ENCODE measurements at regions of chr20 and their contacts with region 1.

Region 1: GRCh38 chr20:62972270-62973032 is 19.9 kb downstream of the SLC17A9 start:
- DNase-seq: peak; percentile 86
- H3K4me3 ChIP-seq: no peak overlapping the region
- H3K27ac ChIP-seq: no peak overlapping the region
- H3K4me1 ChIP-seq: no peaks in the 10 kb centered on the region
- H3K27me3 ChIP-seq: peaks cover 39% of the 10 kb centered on the region
- CTCF ChIP-seq: peak; percentile 90

Region 2: DNA sequence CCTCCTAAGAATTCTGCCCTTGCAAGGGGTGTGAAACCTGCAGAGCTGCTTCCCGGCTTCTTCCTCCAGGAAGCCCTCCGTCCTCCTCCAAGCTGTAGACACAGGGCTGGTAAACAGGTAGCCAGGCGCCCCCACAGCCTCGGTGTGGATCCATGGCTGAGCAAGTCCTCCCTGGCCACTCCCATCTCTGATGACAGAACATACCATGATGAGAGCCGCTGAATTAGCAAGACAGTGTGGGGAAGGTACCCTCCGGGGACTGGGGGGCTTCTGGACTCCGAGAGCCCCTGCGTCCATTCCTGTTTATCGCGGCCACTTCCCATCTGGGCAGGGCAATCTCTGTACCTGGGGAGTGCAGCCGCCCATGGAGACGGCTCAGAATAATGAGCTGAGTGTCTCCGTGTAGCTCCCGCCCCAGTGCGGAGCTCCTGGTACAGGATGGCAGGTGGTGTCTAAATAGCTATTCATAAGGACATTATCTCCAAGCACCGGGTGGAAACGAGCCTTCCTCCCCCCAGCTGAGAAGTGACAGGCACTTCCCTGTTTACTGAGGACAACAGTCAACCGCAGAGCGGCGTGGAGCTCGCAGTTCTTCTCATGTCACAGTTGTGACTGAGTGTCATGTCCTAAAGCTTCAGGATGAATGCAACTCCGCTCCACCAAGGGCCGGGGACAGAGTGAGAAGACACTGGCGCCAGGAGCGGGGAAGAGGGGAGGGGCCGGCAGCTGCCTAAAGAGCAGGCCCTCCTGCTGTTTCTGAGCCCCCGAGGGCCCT is 286.5 kb before region 1 on chr20:
- CTCF ChIA-PET with region 1: no interaction called
- POLR2A ChIA-PET with region 1: no interaction called
- intact Hi-C with region 1: no loop called
- DNase-seq: no peak
- H3K4me3 ChIP-seq: no peak overlapping the region
- H3K27ac ChIP-seq: no peak overlapping the region
- H3K4me1 ChIP-seq: peaks cover 53% of the 10 kb centered on the region
- H3K27me3 ChIP-seq: no peaks in the 10 kb centered on the region
- CTCF ChIP-seq: no peak

Region 3: DNA sequence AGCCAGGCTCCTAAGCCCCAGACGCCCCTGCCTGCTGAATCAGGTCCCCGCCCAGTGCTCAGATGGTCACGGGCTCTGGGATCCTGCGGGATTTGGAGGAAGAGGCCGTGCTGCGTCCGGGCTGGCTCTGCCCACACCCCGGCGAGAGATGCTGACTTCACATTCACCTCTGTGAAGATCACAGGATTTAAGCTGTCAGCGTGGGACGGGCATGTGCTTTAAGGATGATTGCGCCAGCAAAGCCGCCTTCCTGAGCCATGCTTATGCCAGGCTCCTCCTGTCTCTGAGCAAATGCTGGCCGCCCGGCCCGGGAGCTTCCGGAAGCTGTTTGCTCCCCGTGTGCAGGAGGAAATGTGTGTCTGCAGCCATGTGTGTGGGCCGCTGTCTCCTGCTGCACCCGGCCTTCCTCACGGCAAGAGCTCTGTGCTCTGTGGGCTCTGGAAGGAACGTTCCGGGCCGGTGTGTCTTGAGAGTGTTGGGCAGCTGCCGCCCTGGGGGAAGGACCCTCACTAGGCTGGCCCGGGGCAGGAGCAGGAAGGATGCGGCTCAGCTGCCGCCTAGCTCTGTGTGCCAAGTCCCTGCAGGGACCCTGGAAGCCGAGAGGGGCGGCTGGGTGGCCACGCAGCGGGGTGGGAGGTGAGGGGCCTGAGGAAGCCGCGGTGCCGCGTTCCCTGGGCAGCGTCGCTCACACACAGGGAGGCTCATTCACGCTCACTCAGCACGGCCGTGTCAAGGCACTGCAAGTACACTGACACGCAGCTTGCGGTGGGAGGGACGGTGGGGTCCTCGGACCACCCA is 53.3 kb after region 1 on chr20:
- CTCF ChIA-PET with region 1: interaction called, 10 read pairs
- POLR2A ChIA-PET with region 1: no interaction called
- intact Hi-C with region 1: no loop called
- DNase-seq: peak; percentile 79
- H3K4me3 ChIP-seq: no peak overlapping the region
- H3K27ac ChIP-seq: no peak overlapping the region
- H3K4me1 ChIP-seq: peaks cover 13% of the 10 kb centered on the region
- H3K27me3 ChIP-seq: no peaks in the 10 kb centered on the region
- CTCF ChIP-seq: no peak

Region 4: DNA sequence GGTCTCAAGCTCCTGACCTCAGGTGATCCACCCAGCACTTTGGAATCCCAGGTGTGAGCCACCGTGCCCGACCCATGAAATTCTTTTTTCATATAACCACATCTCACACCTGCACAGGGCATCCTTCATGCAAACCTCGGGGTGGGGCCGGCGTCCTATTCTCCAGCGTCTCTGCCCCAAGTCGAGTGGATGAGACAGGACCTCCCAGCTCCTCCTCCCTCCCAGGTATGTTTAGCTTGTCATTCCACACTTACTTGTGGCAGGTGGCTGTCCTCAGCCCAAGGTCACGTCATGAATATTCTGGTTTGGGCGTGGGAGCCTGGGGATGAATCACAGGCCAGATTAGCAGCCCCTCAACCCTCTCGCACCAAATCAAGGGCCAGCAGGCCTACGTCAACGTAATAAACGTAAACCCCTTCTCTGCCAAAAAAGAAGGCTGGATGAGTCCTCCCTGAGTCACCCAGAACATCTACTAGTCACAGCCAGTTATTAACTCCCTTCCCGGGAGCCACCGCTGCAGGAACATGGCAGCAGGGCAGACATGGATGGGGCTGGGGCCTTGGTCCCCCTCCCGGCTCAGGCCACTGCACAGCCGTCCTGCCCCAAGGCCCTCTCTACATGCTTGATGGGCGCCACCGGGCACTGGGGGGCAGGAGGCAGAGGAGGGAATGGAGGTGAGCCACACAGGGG is 151.8 kb after region 1 on chr20:
- CTCF ChIA-PET with region 1: interaction called, 11 read pairs
- POLR2A ChIA-PET with region 1: no interaction called
- intact Hi-C with region 1: no loop called
- DNase-seq: no peak
- H3K4me3 ChIP-seq: no peak overlapping the region
- H3K27ac ChIP-seq: no peak overlapping the region
- H3K4me1 ChIP-seq: no peaks in the 10 kb centered on the region
- H3K27me3 ChIP-seq: peaks cover 88% of the 10 kb centered on the region
- CTCF ChIP-seq: no peak

Measured in A673 (cell line).